Activated B cell treated with CpG ODN at 0.5 μM for 24 hours (primary cell): ENCODE measurements at regions of chrX and their contacts with region 1.

Region 1: DNA sequence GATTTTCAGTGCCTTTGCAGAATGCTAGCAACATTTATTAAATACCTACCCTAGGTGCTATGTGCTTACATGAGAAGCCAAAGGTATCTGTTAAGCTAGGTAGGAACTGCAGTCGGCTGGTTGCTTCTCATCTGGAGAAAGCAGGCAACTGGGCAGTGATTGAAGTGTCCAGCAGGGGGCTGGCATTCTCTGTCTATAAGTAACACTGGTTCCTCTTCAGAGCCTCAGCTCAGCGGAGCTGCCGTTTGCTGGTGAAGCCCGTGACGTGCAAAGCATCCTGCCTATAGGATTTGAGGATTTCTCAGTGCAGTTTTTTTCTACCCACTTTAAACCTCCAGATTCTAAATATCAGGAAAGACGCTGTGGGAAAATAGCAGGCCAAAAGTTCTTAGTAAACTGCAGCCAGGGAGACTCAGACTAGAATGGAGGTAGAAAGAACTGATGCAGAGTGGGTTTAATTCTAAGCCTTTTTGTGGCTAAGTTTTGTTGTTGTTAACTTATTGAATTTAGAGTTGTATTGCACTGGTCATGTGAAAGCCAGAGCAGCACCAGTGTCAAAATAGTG is at the start of gene GRPR:
- DNase-seq: peak; percentile 29
- ATAC-seq: peak; percentile 76
- H3K4me3 Mint-ChIP-seq: no peak within 1 kb of the TSS
- H3K27ac Mint-ChIP-seq: no peak within 1 kb of the TSS
- H3K4me1 Mint-ChIP-seq: peaks cover 33% of the 10 kb centered on the region
- H3K27me3 Mint-ChIP-seq: peaks cover 2% of the 10 kb centered on the region
- CTCF ChIP-seq: peak; percentile 25
- total RNA-seq, gene GRPR: 0.16 and 0.37 TPM in 2 replicates

Region 2: DNA sequence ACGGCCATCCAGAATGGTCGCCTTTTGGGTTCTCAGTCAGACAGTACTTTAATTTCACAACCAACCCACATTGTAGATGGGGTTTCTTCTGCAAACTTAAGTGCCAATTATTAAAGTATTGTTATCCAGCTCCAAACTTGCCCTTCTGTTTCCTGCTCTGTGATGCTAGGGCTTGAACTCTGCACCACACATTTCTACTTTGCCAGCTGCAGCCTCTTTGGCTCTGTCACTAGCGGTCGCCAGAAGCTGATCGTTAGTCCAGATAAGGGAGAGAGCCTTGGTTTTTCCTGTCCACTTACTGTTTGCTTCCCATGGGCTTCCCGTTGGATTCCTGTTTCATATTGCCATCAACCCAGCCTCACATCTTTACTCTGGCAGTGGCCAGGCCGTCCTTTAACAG is 1050.0 kb before region 1 on chrX:
- CTCF ChIA-PET with region 1: no interaction called
- POLR2A ChIA-PET with region 1: no interaction called
- intact Hi-C with region 1: no loop called
- DNase-seq: no peak
- ATAC-seq: no peak
- H3K4me3 Mint-ChIP-seq: no peak overlapping the region
- H3K27ac Mint-ChIP-seq: no peak overlapping the region
- H3K4me1 Mint-ChIP-seq: no peaks in the 10 kb centered on the region
- H3K27me3 Mint-ChIP-seq: no peaks in the 10 kb centered on the region
- CTCF ChIP-seq: no peak

Region 3: GRCh38 chrX:15335135-15336022 is 787.9 kb before region 1 on chrX and contains the start of gene PIGA:
- CTCF ChIA-PET with region 1: no interaction called
- POLR2A ChIA-PET with region 1: no interaction called
- intact Hi-C with region 1: loop called (anchors 5 kb)
- DNase-seq: peak; percentile 77
- ATAC-seq: peak; percentile 94
- H3K4me3 Mint-ChIP-seq: peak within 1 kb of the TSS; percentile 94
- H3K27ac Mint-ChIP-seq: peak within 1 kb of the TSS; percentile 91
- H3K4me1 Mint-ChIP-seq: peaks cover 19% of the 10 kb centered on the region
- H3K27me3 Mint-ChIP-seq: no peaks in the 10 kb centered on the region
- CTCF ChIP-seq: no peak
- total RNA-seq, gene PIGA: 15.7 and 24.9 TPM in 2 replicates

Region 4: DNA sequence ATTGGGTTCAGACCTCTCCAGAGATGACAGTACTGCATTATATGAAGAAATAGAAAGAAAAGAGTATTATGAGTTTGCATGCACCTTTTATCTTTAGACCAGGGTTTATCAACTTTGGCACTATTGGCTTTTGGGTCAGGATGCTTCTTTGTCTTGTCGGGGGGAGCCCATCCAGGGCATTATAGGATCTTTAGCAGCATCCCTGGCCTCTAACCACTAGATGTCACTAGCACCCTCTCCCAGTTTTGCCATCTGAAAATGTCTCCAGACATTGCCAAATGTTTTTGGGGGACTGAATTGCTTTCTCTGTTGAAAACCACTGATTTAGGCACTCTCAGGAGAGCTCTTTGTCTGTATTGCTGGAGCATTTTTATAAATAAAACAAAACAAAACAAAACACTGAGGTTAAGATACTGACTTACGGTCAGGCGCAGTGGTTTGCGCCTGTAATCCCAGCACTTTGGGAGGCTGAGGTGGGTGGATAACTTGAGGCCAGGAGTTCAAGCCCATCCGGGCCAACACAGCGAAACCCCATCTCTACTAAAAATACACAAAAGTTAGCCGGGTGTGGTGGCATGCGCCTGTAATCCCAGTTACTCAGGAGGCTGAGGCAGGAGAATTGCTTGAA is 361.6 kb before region 1 on chrX:
- CTCF ChIA-PET with region 1: no interaction called
- POLR2A ChIA-PET with region 1: no interaction called
- intact Hi-C with region 1: loop called (anchors 2 kb)
- DNase-seq: no peak
- ATAC-seq: peak; percentile 37
- H3K4me3 Mint-ChIP-seq: no peak overlapping the region
- H3K27ac Mint-ChIP-seq: peak overlapping the region; percentile 50
- H3K4me1 Mint-ChIP-seq: peaks cover 10% of the 10 kb centered on the region
- H3K27me3 Mint-ChIP-seq: no peaks in the 10 kb centered on the region
- CTCF ChIP-seq: no peak

Region 5: GRCh38 chrX:15903186-15903681 is 220.1 kb before region 1 on chrX:
- CTCF ChIA-PET with region 1: interaction called, 3 read pairs
- POLR2A ChIA-PET with region 1: no interaction called
- intact Hi-C with region 1: loop called (anchors 2 kb)
- DNase-seq: peak; percentile 17
- ATAC-seq: peak; percentile 88
- H3K4me3 Mint-ChIP-seq: peak overlapping the region; percentile 57
- H3K27ac Mint-ChIP-seq: peak overlapping the region; percentile 88
- H3K4me1 Mint-ChIP-seq: peaks cover 26% of the 10 kb centered on the region
- H3K27me3 Mint-ChIP-seq: no peaks in the 10 kb centered on the region
- CTCF ChIP-seq: no peak

Region 6: DNA sequence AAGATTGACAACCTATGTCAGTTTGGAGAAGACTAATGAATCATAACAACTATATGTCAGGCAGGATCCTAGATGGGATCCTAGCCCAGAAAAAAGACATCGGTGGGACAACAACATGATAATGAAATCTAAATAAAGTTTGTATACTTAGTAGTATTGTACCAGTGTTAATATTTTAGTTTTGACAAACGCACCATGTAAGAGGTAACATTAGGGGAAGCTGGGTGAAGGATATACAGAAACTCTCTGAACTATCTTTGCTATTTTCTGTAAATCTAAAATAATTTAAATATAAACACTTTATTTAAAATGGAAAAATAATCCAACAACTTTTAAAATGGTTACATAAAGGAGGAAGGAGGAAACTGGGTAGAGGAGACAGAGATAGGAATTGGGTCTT is 163.1 kb before region 1 on chrX:
- CTCF ChIA-PET with region 1: no interaction called
- POLR2A ChIA-PET with region 1: no interaction called
- intact Hi-C with region 1: no loop called
- DNase-seq: no peak
- ATAC-seq: no peak
- H3K4me3 Mint-ChIP-seq: no peak overlapping the region
- H3K27ac Mint-ChIP-seq: no peak overlapping the region
- H3K4me1 Mint-ChIP-seq: no peaks in the 10 kb centered on the region
- H3K27me3 Mint-ChIP-seq: no peaks in the 10 kb centered on the region
- CTCF ChIP-seq: no peak

Region 7: DNA sequence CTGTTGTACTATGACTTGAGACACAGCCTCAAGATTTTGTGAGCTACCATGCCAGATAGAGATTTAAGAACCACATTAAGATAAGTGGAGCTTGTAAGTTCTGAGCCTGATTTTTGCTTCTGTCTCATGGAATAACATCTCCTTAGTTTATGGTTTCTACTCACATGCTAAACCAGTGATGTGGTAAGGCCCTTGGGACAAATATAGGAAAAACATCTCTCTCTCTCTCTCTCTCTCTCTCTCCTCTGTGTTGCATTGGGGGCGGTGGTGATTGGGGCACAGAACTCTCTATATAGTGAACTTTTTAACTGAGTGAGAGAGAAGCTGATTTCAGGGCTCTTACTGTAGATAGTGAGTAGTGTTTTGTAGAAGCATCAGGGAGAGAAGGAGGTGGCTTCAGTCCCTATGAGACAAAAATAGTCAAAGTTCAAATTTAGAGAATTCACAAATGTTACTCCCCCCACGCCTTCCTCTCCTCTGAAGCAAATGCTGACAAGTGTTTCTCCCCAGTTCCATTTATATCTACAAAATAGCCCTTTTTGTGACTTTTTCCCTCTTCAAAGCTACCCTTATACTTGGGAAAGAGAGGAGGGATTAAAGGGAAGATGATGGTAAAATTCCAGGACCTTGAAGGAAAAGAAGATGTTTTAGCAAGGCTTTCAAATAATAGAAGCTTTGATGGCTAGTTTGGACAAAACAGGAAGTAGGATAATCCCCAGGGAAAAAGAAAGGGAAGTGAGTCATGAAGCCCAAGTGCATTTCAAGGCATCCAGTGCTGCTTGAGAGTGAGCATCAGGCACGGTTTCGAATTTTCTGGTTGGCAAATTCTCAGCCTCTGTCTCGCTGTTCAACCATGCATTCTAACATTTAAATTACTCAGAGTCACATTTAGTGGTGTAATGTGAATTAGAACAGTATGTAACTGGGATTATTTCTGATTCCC is 134.4 kb before region 1 on chrX:
- CTCF ChIA-PET with region 1: interaction called, 3 read pairs
- POLR2A ChIA-PET with region 1: no interaction called
- intact Hi-C with region 1: loop called (anchors 2 kb)
- DNase-seq: no peak
- ATAC-seq: peak; percentile 89
- H3K4me3 Mint-ChIP-seq: peak overlapping the region; percentile 64
- H3K27ac Mint-ChIP-seq: peak overlapping the region; percentile 88
- H3K4me1 Mint-ChIP-seq: peaks cover 26% of the 10 kb centered on the region
- H3K27me3 Mint-ChIP-seq: no peaks in the 10 kb centered on the region
- CTCF ChIP-seq: no peak

Region 8: GRCh38 chrX:16212436-16212835 is 89.1 kb after region 1 on chrX:
- CTCF ChIA-PET with region 1: interaction called, 3 read pairs
- POLR2A ChIA-PET with region 1: no interaction called
- intact Hi-C with region 1: loop called (anchors 2 kb)
- DNase-seq: no peak
- ATAC-seq: no peak
- H3K4me3 Mint-ChIP-seq: no peak overlapping the region
- H3K27ac Mint-ChIP-seq: no peak overlapping the region
- H3K4me1 Mint-ChIP-seq: no peaks in the 10 kb centered on the region
- H3K27me3 Mint-ChIP-seq: no peaks in the 10 kb centered on the region
- CTCF ChIP-seq: no peak

Region 9: GRCh38 chrX:16445166-16445752 is 322.0 kb after region 1 on chrX:
- CTCF ChIA-PET with region 1: interaction called, 10 read pairs
- POLR2A ChIA-PET with region 1: no interaction called
- intact Hi-C with region 1: loop called (anchors 1 kb)
- DNase-seq: peak; percentile 15
- ATAC-seq: peak; percentile 62
- H3K4me3 Mint-ChIP-seq: no peak overlapping the region
- H3K27ac Mint-ChIP-seq: no peak overlapping the region
- H3K4me1 Mint-ChIP-seq: no peaks in the 10 kb centered on the region
- H3K27me3 Mint-ChIP-seq: peaks cover 2% of the 10 kb centered on the region
- CTCF ChIP-seq: no peak